PC-3 (cell line): ENCODE measurements at regions of chr4 and their contacts with region 1.

Region 1: DNA sequence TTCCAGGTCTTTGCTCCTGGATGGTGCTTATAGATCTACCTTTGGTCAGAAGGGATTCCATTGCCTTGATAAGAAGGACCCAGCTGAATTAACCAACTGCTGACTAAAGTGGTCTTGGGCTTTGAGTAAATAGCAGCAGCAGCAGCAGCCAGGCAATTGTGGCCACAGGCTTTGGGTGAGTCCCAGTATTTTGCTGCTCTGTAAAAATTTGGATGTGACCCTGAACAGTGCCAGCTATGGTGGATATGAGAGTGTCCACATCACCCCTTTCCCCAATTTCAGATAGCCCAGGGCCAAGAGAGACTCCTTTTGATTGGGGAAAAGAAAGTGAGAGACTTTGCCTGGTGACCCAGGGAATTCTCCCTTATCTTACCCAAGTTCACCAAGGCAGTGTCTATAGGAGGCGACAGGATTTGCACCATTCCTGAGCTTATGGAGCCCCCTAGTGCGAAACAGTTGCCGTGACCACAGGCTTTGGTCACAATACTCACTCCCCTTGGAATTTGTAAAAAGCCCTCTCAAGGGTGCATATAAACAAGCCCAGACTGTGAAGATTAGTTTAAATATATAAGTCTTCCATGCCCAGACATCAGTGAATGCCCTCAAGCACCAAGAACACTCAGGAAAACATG is 518.0 kb downstream of the TMA16 start:
- DNase-seq: peak; percentile 58
- ATAC-seq: peak; percentile 87; the same call in 1 of the 2 replicates
- H3K4me3 ChIP-seq: no peak overlapping the region
- H3K27ac ChIP-seq: no peak overlapping the region
- H3K4me1 ChIP-seq: no peaks in the 10 kb centered on the region
- H3K27me3 ChIP-seq: no peaks in the 10 kb centered on the region
- CTCF ChIP-seq: peak; percentile 71

Region 2: DNA sequence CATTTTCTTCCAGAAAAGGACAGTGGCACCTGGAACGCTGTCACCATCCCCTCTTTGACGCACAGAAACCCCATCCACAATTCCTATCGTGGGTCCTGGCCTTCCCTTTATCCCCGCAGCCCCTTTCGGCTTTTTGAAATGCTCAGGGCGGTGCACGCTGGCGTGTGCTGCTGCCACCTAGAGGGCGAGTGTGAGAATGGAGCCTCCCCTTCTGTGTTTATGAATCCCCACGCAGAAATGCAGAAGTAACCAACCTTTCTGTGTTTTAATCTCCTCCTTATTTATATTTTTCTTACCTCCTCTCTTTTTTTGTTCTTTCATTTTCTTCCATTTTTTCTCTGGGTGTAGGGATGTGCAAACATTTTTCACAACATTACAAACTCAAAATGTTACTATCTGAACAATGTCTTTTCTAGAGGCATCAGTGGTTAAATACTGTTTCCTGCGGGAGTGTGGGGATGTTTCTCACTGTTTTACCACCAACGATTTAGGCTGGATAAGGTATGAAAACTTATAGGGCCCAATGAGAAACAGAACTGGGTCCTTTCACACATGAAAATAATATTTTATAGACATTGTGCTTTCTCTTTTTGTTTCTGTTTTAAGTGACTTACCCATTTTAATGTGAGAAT is 468.0 kb before region 1 on chr4:
- CTCF ChIA-PET with region 1: interaction called, 10 read pairs
- POLR2A ChIA-PET with region 1: no interaction called
- intact Hi-C with region 1: no loop called
- DNase-seq: peak; percentile 58
- ATAC-seq: peak; percentile 11; the same call in 1 of the 2 replicates
- H3K4me3 ChIP-seq: peak overlapping the region; percentile 29; the same call in 1 of the 2 replicates
- H3K27ac ChIP-seq: no peak overlapping the region
- H3K4me1 ChIP-seq: peaks cover 36% of the 10 kb centered on the region
- H3K27me3 ChIP-seq: no peaks in the 10 kb centered on the region
- CTCF ChIP-seq: peak; percentile 85

Region 3: DNA sequence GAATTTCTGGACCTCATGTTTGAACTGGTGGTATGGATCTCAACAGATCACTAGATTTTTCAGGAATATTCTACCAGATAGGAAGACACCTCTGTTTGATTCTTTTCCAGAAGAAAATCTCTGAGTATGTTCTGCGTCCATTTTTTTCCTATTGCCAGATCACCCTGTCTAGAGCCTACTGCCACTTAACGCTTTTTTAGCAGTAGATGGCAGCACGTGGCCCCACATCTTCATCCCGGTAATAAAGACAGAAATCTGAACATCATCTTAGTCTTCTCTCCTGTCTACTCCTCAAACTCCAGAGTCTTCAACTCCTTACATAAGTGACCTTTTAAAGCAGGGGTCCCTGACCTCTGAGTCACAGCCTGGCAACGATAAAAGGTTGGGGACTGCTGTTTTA is 333.3 kb before region 1 on chr4:
- CTCF ChIA-PET with region 1: no interaction called
- POLR2A ChIA-PET with region 1: no interaction called
- intact Hi-C with region 1: loop called (anchors 1 kb)
- DNase-seq: peak; percentile 55
- ATAC-seq: peak; percentile 80
- H3K4me3 ChIP-seq: no peak overlapping the region
- H3K27ac ChIP-seq: no peak overlapping the region
- H3K4me1 ChIP-seq: peaks cover 5% of the 10 kb centered on the region
- H3K27me3 ChIP-seq: no peaks in the 10 kb centered on the region
- CTCF ChIP-seq: peak; percentile 63

Region 4: GRCh38 chr4:163930086-163930485 is 82.4 kb before region 1 on chr4:
- CTCF ChIA-PET with region 1: no interaction called
- POLR2A ChIA-PET with region 1: no interaction called
- intact Hi-C with region 1: loop called (anchors 1 kb)
- DNase-seq: no peak
- ATAC-seq: no peak
- H3K4me3 ChIP-seq: no peak overlapping the region
- H3K27ac ChIP-seq: no peak overlapping the region
- H3K4me1 ChIP-seq: no peaks in the 10 kb centered on the region
- H3K27me3 ChIP-seq: no peaks in the 10 kb centered on the region
- CTCF ChIP-seq: 0 out of 2 replicates have a peak, but pooled peaks have one; percentile 14

Region 5: GRCh38 chr4:164731827-164732474 is 719.4 kb after region 1 on chr4:
- CTCF ChIA-PET with region 1: interaction called, 4 read pairs
- POLR2A ChIA-PET with region 1: no interaction called
- intact Hi-C with region 1: loop called (anchors 5 kb)
- DNase-seq: peak; percentile 63
- ATAC-seq: peak; percentile 51; the same call in 1 of the 2 replicates
- H3K4me3 ChIP-seq: no peak overlapping the region
- H3K27ac ChIP-seq: no peak overlapping the region
- H3K4me1 ChIP-seq: no peaks in the 10 kb centered on the region
- H3K27me3 ChIP-seq: no peaks in the 10 kb centered on the region
- CTCF ChIP-seq: peak; percentile 86